IMR-90 (cell line): ENCODE measurements at regions of chr20 and their contacts with region 1.

Region 1: DNA sequence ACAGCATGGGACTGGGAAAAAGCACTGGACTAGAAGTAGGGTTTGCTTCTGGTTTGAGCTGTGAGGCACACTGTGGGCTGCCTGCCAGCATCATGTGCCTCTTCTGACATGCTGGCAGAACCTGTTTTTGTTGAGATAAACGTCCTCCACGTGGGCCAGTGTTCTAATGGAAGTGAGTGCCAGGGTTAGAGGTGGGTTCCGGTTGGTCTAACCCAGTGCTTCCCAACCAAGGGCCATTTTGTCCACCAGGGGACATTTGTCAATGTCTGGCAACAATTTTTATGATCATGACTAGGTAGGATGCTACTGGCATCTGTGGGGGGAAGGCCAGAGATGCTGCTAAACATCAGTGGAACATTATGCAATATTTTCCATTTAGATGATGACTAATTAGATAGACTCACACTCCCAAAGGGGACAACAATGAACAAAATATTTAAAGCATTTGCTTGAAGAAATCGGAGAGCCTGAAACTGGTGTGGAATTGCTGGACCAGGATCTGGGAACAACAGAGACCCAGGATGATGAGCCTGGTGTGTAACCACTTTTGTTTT is 7.8 kb upstream of the APMAP start:
- DNase-seq: peak; percentile 44
- ATAC-seq: peak; percentile 72
- H3K4me3 ChIP-seq: no peak overlapping the region
- H3K27ac ChIP-seq: no peak overlapping the region
- H3K4me1 ChIP-seq: peaks cover 2% of the 10 kb centered on the region; the same call in 1 of the 2 replicates
- H3K27me3 ChIP-seq: peaks cover 32% of the 10 kb centered on the region
- CTCF ChIP-seq: no peak
- POLR2A ChIP-seq: no peak
- RAD21 ChIP-seq: no peak

Region 2: DNA sequence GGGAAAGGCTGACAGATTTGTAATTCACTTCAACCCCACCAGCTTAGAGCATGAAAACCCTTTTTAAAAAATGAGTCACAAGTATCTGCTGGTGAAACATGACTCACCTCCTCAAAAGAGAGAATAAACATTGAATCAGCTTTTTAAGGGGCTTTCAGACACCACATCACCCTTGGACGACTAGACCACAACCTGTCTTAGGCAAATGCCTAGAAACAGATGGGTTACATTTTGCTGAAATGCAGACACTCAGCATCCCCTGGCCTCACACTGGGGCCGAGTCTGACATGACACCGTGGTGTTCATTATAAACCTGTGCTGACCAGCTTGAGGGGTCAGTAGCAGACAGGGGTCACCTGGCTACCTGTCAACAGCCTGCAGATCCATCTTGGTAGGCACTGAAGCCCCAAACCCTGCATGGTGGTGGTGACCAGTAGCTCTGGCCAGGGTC is 226.6 kb before region 1 on chr20:
- CTCF ChIA-PET with region 1: no interaction called
- POLR2A ChIA-PET with region 1: no interaction called
- dilution Hi-C with region 1: no loop called
- in situ Hi-C with region 1: no loop called
- intact Hi-C with region 1: no loop called
- DNase-seq: peak; percentile 72
- ATAC-seq: peak; percentile 64
- H3K4me3 ChIP-seq: no peak overlapping the region
- H3K27ac ChIP-seq: no peak overlapping the region
- H3K4me1 ChIP-seq: 0 out of 2 replicates have a peak, but pooled peaks cover 2% of the 10 kb centered on the region
- H3K27me3 ChIP-seq: peaks cover 26% of the 10 kb centered on the region
- CTCF ChIP-seq: no peak
- POLR2A ChIP-seq: no peak
- RAD21 ChIP-seq: no peak

Region 3: DNA sequence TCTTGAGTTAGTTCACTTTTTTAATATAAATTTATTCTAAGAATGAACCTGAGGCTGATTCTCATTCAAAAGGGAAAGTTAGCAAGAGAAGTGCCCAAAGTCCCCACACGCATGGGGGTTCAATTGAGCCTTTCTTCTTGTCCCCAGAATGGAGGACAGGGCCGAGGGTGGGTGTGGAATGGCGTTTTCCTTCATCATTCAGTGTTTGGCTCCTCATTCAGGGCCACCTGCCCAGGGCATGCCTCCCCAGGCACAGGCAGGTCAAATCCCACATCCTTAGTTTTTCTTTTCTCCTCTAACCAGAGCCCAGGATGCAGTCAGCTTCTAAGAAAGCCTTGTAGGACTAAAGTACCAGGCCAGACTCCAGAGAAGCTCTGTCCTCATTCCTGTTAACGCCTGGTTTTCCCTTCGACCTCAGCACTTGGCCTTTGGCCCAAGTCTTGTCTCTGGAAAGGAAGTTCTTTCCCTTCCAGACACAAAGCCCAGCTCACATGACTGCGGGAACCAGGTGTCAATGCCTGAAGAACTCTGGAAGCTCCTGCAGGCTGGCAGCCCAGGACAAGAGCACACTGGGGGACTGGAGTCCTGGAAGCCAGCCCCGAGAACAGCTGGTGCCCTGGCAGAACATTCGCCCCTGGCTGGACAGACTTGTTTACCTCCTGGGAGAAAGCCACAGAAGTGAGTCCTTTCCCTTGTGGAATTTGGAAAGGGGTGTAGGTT is 39.2 kb after region 1 on chr20:
- CTCF ChIA-PET with region 1: no interaction called
- POLR2A ChIA-PET with region 1: no interaction called
- dilution Hi-C with region 1: no loop called
- in situ Hi-C with region 1: no loop called
- intact Hi-C with region 1: loop called (anchors 2 kb)
- DNase-seq: peak; percentile 44
- ATAC-seq: peak; percentile 73
- H3K4me3 ChIP-seq: no peak overlapping the region
- H3K27ac ChIP-seq: peak overlapping the region; percentile 9; the same call in 1 of the 2 replicates
- H3K4me1 ChIP-seq: peaks cover 7% of the 10 kb centered on the region; the same call in 1 of the 2 replicates
- H3K27me3 ChIP-seq: peaks cover 8% of the 10 kb centered on the region
- CTCF ChIP-seq: no peak
- POLR2A ChIP-seq: no peak
- RAD21 ChIP-seq: no peak